Calu3 (cell line): ENCODE measurements at regions of chr4 and their contacts with region 1.

Region 1: DNA sequence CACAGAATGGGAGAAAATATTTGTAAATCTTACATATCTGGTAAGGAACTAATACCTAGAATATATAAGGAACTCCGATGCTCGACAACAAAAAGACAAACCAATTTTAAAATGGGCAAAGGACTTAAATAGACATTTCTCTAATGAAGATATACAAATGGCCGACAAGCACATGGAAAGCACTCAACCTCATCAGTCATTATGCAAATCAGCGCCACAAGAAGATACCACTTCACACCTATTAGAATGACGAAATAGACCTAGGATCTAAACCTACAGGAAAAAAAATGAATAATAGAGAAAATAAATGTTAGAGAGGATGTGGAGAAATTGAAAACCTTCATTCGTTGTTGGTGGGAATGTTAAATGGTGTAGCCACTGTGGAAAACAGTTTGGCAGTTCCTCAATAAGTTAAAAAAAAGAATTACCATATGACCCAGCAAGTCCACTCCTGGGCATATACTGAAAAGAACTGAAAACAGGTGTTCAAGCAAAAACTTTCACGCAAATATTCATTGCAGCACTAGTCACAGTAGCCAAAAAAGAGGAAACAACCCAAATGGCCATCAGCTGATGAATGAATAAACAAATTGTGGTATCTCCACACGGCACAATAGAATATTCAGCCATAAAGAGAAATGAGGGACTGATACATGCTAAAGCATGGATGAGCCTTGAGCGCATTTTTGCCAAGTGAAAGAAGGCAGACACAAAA is 57.3 kb upstream of the WDR19 start:
- DNase-seq: no peak
- H3K4me3 Mint-ChIP-seq: no peak overlapping the region
- H3K27ac Mint-ChIP-seq: no peak overlapping the region
- H3K4me1 Mint-ChIP-seq: no peaks in the 10 kb centered on the region
- H3K27me3 Mint-ChIP-seq: no peaks in the 10 kb centered on the region
- CTCF ChIP-seq: no peak

Region 2: DNA sequence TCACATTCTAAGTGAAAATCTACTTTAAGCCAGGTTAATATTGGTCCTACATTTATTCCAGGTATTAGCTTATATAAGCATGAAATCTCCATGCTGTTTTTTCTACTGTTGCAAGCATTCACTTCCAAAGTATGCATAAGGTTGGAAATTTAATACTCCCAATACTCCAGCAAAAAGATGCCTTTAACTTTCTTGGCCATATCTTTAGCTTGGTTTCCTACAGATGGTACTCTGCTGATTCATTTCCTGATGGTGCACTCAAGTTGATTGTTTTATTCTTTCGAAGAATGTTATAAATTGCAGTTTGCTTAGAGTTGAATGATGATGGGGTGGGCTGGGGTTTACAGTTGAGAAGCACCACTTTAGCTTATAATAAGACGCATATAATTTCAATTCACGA is 834.7 kb before region 1 on chr4:
- CTCF ChIA-PET with region 1: no interaction called
- intact Hi-C with region 1: loop called (anchors 10 kb)
- DNase-seq: no peak
- H3K4me3 Mint-ChIP-seq: no peak overlapping the region
- H3K27ac Mint-ChIP-seq: no peak overlapping the region
- H3K4me1 Mint-ChIP-seq: no peaks in the 10 kb centered on the region
- H3K27me3 Mint-ChIP-seq: no peaks in the 10 kb centered on the region
- CTCF ChIP-seq: no peak

Region 3: GRCh38 chr4:39043861-39044363 is 81.1 kb before region 1 on chr4:
- CTCF ChIA-PET with region 1: no interaction called
- intact Hi-C with region 1: no loop called
- DNase-seq: no peak
- H3K4me3 Mint-ChIP-seq: peak overlapping the region; percentile 56
- H3K27ac Mint-ChIP-seq: peak overlapping the region; percentile 73
- H3K4me1 Mint-ChIP-seq: peaks cover 31% of the 10 kb centered on the region
- H3K27me3 Mint-ChIP-seq: no peaks in the 10 kb centered on the region
- CTCF ChIP-seq: no peak

Region 4: DNA sequence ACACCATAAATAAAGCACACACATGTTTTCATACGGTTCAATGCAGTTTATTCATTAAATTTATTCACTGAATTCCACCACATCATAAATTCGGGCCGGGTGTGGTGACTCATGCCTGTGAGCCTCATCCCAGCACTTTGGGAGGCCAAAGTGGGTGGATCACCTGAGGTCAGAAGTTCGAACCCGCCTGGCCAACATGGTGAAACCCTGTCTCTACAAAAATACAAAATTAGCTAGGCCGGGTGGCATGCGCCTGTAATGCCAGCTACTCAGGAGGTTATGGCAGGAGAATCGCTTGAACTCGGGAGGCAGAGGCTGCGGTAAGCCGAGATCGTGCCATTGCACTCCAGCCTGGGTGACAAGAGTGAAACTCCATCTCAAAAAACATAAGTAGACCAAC is 721.1 kb after region 1 on chr4:
- CTCF ChIA-PET with region 1: no interaction called
- intact Hi-C with region 1: no loop called
- DNase-seq: no peak
- H3K4me3 Mint-ChIP-seq: no peak overlapping the region
- H3K27ac Mint-ChIP-seq: no peak overlapping the region
- H3K4me1 Mint-ChIP-seq: no peaks in the 10 kb centered on the region
- H3K27me3 Mint-ChIP-seq: no peaks in the 10 kb centered on the region
- CTCF ChIP-seq: no peak